Vagina (tissue), 2 donors: ENCODE measurements at regions of chr4 and their contacts with region 1.

Region 1: DNA sequence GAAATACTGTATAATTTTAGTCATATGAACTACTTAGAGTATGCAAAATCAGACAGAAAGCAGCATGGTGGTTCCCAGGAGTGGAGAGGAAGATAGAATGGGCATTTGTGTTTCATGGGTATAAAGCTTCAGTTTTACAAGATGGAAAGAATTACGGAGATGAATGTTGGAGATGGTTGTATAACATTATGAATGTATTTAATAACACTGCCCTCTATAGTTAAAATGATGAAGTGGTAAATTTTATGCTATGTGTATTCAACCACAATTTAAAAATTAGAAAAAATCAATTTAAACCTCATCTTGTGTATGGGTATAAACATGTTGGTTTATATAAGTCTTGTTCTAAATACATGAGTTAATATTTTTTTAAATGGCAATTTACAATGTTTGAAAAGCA is 521.1 kb downstream of the FSTL5 start:
- DNase-seq: no peak
- H3K4me3 ChIP-seq: no peak overlapping the region
- H3K27ac ChIP-seq: no peak overlapping the region
- H3K4me1 ChIP-seq: no peaks in the 10 kb centered on the region
- H3K27me3 ChIP-seq: no peaks in the 10 kb centered on the region
- CTCF ChIP-seq: no peak
- POLR2A ChIP-seq: no peak

Region 2: GRCh38 chr4:160595646-160596045 is 1047.1 kb before region 1 on chr4:
- intact Hi-C with region 1: loop called (anchors 5 kb)
- DNase-seq: no peak
- H3K4me3 ChIP-seq: no peak overlapping the region
- H3K27ac ChIP-seq: no peak overlapping the region
- H3K4me1 ChIP-seq: no peaks in the 10 kb centered on the region
- H3K27me3 ChIP-seq: no peaks in the 10 kb centered on the region
- CTCF ChIP-seq: no peak
- POLR2A ChIP-seq: no peak

Region 3: DNA sequence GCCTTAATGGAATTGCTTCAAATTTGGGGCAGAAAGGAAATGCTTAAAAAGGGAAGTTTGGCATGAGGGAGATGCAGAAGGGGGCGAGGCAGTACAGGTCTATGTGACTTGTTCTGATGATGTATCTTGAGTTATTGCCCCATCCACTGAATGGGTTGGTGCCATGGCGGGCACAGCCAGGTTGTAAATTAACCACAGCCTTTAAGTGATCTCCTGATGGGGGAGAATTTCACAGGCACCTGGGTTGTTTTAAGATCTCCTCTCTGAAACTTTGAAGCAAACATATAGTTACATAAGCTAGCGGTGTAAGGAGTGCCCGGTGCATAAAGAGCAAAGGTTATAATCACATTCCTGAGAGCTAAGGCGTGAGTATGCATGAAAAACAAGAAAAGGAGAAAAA is 1738.0 kb after region 1 on chr4:
- intact Hi-C with region 1: no loop called
- DNase-seq: no peak
- H3K4me3 ChIP-seq: no peak overlapping the region
- H3K27ac ChIP-seq: no peak overlapping the region
- H3K4me1 ChIP-seq: no peaks in the 10 kb centered on the region
- H3K27me3 ChIP-seq: no peaks in the 10 kb centered on the region
- CTCF ChIP-seq: no peak
- POLR2A ChIP-seq: no peak